ENCODE measurements at regions of chr9 and their contacts with region 1.

Region 1: DNA sequence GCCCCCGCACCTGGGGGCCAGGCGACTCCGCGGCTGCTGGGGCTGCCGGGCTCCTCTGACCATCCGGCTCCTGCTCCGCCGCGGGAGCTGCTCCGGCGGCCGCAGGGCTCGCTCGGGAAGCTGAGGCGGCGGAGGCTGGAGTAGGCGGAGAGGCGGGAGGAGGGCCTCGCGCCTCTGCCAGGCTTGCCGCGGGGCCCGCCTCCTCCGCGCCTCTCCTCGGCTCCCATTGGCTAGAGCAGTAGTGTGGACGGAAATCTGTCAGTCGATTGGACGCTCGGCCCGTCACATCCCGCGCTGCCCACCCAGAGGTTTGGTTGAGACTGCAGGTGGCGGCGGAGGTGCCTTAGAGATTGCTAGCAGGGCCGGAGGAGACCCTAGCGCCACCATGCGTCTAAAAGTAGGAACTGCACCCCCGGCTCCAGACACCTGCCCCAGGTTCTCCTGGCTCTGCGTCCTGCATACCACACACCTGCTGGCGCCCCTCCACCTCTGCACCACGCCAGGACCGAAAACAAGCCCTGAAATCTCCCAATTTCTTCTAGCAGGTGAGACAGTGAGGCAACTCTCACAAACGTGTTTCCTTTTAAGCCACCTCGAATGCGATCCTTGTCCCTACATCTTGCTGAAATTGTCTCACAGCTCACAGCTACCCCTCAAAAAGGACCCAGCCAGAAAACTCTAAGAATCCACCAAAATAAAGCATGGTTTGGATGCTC is at the start of gene SCAI:
- DNase-seq: peak; percentile 100
- H3K4me3 ChIP-seq: peak within 1 kb of the TSS; percentile 80 to 96 (median 86)
- H3K27ac ChIP-seq: peak within 1 kb of the TSS; percentile 70 to 88 (median 84)
- H3K4me1 ChIP-seq: peaks cover 5 to 31% (median 30%) of the 10 kb centered on the region in 4 donors
- H3K27me3 ChIP-seq: no peaks in the 10 kb centered on the region
- CTCF ChIP-seq: peak in 2 of 3 experiments; percentile 99
- EP300 ChIP-seq: no peak
- POLR2A ChIP-seq: no peak
- total RNA-seq, gene SCAI: 5.6 to 10.4 (median 7.8) TPM

Region 2: DNA sequence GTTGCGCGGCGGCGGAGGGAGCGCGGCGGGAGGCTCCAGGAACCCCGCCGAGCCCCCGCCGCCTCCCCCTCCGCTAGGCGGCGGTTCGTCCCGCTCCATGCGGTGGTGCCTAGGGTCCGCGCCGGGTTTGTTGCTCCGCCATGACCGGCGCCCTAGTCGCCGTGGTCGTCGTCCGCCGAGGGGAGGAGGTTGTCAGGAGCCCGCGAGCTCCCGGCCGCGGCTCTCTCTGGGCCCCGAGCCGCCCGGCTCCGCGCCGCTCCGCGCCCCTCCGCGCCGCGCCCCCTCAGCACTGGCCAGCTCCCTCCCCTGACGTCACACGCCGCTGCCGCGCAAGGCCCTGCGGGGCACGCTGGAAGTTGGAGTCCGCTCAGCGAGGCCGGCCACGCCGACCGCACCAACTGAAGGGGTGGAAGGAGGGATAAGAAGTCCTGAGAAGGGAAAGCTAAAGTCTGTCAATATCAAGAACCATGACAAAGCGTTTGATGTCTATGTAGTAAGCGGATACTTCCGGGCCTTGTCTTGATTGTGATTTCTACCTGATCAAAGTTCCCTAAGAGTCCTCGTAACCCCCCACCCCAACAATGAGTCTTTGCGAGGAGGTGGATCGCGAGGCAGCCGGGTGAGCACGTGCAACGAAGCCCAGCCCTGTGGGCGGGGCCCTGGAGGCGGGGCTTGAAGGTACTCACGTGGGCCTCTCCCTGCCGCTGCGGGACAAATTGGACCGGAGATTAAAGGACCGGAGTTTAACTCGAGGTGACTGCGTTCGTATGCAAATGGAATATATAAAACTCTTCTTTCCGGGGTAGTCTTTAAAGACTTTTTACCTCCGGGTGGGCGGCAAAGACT is 372.3 kb before region 1 on chr9 and contains the start of gene NR6A1:
- intact Hi-C with region 1: loop called (anchors 5 kb)
- DNase-seq: peak; percentile 98
- H3K4me3 ChIP-seq: peak within 1 kb of the TSS; percentile 81 to 95 (median 86)
- H3K27ac ChIP-seq: peak within 1 kb of the TSS; percentile 53 to 81 (median 75)
- H3K4me1 ChIP-seq: peaks cover 21 to 44% (median 34%) of the 10 kb centered on the region in 4 donors
- H3K27me3 ChIP-seq: peaks cover 3 to 46% (median 16%) of the 10 kb centered on the region in 4 donors
- CTCF ChIP-seq: peak; percentile 20 to 52 (median 32)
- EP300 ChIP-seq: no peak
- POLR2A ChIP-seq: no peak
- total RNA-seq, gene NR6A1: 1.8 to 2.8 (median 2.0) TPM

Region 3: GRCh38 chr9:124852829-124853531 is 290.6 kb before region 1 on chr9 and contains the start of gene WDR38:
- intact Hi-C with region 1: loop called (anchors 10 kb)
- DNase-seq: no peak
- H3K4me3 ChIP-seq: peak within 1 kb of the TSS; percentile 49 to 63 (median 55)
- H3K27ac ChIP-seq: peak within 1 kb of the TSS; percentile 53 to 68 (median 60)
- H3K4me1 ChIP-seq: peaks cover 24 to 31% (median 28%) of the 10 kb centered on the region in 4 donors
- H3K27me3 ChIP-seq: no peaks in the 10 kb centered on the region
- CTCF ChIP-seq: peak in 2 of 3 experiments; percentile 96 to 99
- EP300 ChIP-seq: no peak
- POLR2A ChIP-seq: no peak
- total RNA-seq, gene WDR38: 0.32 TPM in 1 of 4 donors, not detected in the others

Region 4: DNA sequence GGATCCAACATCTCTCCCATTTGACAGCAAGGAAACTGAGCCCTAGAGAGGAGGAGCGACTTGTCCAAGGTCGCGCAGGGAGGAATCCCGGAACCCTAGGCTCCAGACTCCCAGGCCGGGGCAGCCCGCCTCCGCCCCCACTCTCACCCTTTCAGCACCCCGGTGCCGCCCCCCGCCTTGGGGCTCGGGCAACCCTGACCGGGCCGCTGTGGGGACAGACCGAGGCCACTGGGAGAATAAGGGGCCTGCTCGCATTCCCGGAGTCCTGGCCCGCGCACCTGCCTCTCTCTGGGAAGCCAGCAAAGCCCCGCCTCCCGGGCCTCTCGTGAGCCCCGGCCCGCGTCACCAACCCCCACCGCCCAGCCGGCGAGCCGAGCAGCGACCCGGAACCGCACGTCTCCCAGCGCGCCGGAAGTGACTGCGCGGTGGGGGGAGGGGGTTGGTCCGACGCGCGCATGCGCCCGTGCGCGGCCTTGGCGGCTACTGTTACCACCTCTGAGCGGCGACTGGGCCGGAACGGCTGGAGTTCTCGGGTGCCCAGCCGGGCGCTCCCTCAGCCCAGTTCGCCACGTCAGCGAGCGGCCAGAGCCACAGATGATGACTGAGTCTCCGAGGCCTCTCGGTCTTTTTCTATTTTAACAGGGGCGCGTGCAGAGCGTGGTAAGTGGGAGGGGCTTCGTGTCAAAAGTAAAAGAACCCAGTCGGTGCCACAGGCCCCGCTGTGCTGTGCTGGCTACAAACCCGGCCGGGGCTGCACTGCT is 202.7 kb before region 1 on chr9 and contains the start of gene GOLGA1:
- intact Hi-C with region 1: loop called (anchors 2 kb)
- DNase-seq: peak; percentile 98
- H3K4me3 ChIP-seq: peak within 1 kb of the TSS; percentile 74 to 88 (median 80)
- H3K27ac ChIP-seq: peak within 1 kb of the TSS; percentile 93 to 98 (median 93)
- H3K4me1 ChIP-seq: peaks cover 11 to 22% (median 17%) of the 10 kb centered on the region in 4 donors
- H3K27me3 ChIP-seq: peaks cover 0 to 5% (median 0%) of the 10 kb centered on the region in 4 donors
- CTCF ChIP-seq: peak in 1 of 3 experiments; percentile 11
- EP300 ChIP-seq: no peak
- POLR2A ChIP-seq: peak; percentile 71
- total RNA-seq, gene GOLGA1: 22.5 to 26.5 (median 24.7) TPM

Region 5: DNA sequence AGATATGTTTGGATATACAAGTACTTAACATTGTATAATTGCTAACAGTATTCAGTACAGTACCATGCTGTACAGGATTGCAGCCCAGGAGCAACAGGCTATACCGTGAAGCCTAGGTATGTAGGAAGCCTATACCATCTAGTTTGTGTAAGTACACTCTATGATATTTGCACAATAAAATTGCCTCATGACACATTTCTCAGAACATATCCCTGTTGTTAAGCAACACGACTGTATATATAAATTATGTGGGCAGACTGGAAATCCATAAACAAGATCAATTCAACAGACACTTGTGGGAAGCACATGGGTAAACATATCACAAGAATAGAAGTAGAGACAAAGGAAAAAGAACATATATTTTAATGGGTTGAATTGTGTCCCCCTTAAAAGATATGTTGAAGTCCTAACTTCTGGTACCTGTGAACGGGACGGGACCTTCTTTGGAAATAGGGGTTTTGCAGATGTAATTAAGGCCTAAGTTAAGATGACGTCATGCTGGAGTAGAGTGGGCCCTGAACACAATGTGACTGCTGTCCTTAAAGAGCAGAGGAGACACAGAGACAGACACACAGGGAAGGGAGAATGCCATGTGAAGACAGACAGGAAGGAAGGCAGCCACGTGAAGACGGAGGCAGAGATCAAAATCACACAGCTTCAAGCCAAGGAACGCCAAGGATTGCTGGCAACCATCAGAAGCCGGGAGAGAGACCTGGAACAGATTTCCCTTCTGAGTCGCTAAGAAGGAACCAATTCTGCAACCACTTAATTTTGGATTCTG is 76.5 kb before region 1 on chr9:
- intact Hi-C with region 1: loop called (anchors 10 kb)
- DNase-seq: no peak
- H3K4me3 ChIP-seq: no peak overlapping the region
- H3K27ac ChIP-seq: peak overlapping the region; percentile 10 to 57 (median 43)
- H3K4me1 ChIP-seq: peaks cover 0 to 15% (median 9%) of the 10 kb centered on the region in 4 donors
- H3K27me3 ChIP-seq: no peaks in the 10 kb centered on the region
- CTCF ChIP-seq: no peak
- EP300 ChIP-seq: no peak
- POLR2A ChIP-seq: no peak

Region 6: DNA sequence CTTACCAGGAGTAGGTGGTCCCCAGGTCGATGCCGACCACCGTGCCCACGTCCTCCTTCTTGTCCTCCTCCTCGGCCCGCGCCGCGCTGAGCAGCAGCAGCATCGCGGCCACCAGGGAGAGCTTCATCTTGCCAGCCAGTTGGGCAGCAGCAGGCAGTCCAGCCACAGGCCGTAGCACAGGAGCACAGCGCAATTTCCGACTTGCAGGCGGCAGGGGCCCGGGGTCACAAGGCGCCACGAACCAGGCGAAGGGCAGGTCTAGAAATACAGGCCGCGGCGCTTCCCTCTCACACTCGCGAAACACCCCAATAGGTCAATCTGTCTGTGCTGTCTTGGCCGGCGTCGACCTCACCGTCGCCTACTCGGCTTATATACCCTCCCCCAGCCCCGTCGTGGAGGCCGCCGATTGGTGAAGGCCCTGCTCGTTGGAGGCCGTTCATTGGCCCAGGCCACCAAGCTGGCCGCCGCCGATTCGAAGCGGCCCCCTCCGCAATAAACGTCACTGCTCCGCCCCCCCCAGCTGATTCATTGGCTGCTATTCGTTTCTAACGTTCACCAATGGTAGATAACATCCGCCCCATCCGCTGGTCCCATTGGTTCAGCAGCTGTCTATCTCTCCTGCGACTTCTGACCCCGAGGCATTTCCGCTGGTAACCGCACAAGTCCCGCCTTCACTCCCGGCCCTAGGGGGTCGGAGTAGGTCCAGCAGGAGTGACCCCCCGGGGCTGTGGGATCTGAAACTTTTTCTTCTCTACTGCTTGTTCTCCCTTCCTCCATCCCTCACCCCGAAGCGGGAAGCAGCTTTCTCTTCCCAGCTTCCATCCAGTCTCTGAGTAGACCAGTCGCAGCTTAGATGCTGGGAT is 97.7 kb after region 1 on chr9 and contains the start of gene HSPA5:
- intact Hi-C with region 1: loop called (anchors 5 kb)
- DNase-seq: peak; percentile 100
- H3K4me3 ChIP-seq: peak within 1 kb of the TSS; percentile 84 to 86 (median 85)
- H3K27ac ChIP-seq: peak within 1 kb of the TSS; percentile 95 to 96 (median 95)
- H3K4me1 ChIP-seq: peaks cover 42 to 50% (median 48%) of the 10 kb centered on the region in 4 donors
- H3K27me3 ChIP-seq: no peaks in the 10 kb centered on the region
- CTCF ChIP-seq: peak in 2 of 3 experiments; percentile 12 to 20
- EP300 ChIP-seq: no peak
- POLR2A ChIP-seq: peak; percentile 93
- total RNA-seq, gene HSPA5: 57.7 to 88.3 (median 68.7) TPM

Region 7: GRCh38 chr9:125484350-125485282 is 341.1 kb after region 1 on chr9:
- intact Hi-C with region 1: no loop called
- DNase-seq: peak; percentile 91
- H3K4me3 ChIP-seq: no peak overlapping the region
- H3K27ac ChIP-seq: peak overlapping the region; percentile 72 to 80 (median 78)
- H3K4me1 ChIP-seq: peaks cover 28 to 46% (median 41%) of the 10 kb centered on the region in 4 donors
- H3K27me3 ChIP-seq: no peaks in the 10 kb centered on the region
- CTCF ChIP-seq: no peak
- EP300 ChIP-seq: no peak
- POLR2A ChIP-seq: no peak

Measured in esophagus muscularis mucosa (tissue), 4 donors.